ENCODE measurements at regions of chr19 and their contacts with region 1.

Region 1: DNA sequence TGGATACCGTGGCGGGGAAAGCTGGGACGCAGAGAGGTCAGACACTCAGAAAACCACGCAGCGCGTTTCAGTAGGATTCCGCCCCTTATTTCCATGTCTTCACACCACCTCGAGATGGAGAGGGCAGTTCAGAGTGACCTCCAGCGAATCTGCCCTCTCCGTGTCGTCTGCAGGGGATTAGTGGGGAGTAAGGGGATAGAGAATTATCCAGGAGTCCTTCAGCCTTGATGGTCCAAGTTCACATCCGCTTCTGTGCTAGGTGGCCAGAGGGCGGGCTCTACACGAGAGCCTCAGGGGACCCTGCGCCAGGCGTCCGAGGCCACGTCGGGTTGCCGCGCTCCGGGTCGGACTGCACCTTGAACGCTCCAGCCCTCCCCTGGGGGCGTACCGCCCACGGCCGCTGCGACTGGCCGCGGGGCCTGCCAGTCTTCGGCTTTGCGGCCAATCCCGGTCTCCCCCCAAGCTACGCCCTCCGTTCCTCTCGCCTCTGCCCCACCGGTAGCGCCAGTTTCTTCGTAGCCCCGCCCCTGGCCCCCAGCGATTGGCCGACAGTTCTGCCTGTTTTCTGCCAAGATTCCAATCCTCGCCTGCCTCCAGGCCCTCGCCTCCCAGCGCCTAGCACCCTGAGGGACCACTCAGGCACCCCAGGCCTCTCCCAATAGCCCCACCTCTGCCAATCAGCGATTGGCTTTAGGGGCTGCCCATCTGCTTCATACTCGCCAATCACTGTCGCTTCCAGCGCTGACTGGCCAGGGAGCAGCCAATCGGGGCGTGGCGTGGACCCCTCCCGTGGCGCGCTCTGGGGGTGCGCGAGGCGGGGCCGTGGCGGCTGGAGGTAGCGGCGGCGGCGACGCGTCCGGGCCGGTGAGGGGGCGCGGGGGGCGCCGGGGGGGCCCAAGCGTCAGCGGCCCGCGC is at the start of gene SLC25A42:
- DNase-seq: peak; percentile 99
- ATAC-seq: peak; percentile 96
- total RNA-seq, gene SLC25A42: 30.9 TPM

Region 2: GRCh38 chr19:18742838-18743783 is 320.3 kb before region 1 on chr19:
- intact Hi-C with region 1: no loop called
- DNase-seq: peak; percentile 86
- ATAC-seq: peak; percentile 81

Region 3: DNA sequence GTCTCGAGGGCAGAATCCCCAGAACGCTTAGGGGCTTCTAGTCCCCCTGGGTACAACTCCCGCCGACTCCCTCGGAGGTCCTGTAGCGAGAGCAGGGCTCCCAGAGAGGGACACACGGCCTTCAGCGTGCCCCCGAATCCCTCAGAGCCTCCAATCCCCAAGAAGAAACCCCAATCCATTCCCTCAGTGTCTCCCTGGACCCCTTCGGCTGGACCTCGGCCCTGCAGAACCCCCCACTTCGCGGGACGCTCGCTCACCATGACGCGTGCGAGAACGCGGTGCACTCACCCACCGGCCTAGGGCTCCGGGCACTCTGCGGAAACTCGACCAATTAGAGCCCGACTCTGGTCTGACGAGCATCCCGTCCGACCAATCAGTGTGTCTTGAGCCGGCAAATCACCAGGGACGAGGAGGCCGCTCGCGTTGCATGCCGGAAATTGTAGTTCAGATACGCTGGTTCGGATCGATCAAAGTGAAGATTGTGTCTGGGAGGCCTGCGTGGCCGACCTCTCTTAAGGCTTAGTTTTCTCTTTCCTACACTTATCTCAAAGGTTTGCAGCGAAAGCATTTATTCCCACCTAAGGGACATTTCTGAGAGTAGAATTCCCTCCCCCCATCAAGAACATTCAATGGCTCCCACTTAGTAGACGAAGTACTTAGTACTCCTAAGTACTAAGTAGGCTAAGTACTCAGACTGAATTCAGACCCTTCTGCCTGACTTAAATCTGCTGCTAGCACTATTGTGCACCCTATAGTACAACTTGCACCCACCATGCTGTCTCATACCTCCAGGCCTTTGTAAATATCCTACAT is 74.9 kb after region 1 on chr19 and contains the start of gene TMEM161A:
- intact Hi-C with region 1: loop called (anchors 2 kb)
- DNase-seq: peak; percentile 98
- ATAC-seq: peak; percentile 97
- total RNA-seq, gene TMEM161A: 23.5 TPM

Region 4: GRCh38 chr19:19192078-19192882 is 128.8 kb after region 1 on chr19 and contains the starts of genes BORCS8 and RFXANK:
- intact Hi-C with region 1: loop called (anchors 1 kb)
- DNase-seq: peak; percentile 99
- ATAC-seq: peak; percentile 98
- total RNA-seq, gene BORCS8: 19.5 TPM
- total RNA-seq, gene RFXANK: 39.9 TPM

Region 5: DNA sequence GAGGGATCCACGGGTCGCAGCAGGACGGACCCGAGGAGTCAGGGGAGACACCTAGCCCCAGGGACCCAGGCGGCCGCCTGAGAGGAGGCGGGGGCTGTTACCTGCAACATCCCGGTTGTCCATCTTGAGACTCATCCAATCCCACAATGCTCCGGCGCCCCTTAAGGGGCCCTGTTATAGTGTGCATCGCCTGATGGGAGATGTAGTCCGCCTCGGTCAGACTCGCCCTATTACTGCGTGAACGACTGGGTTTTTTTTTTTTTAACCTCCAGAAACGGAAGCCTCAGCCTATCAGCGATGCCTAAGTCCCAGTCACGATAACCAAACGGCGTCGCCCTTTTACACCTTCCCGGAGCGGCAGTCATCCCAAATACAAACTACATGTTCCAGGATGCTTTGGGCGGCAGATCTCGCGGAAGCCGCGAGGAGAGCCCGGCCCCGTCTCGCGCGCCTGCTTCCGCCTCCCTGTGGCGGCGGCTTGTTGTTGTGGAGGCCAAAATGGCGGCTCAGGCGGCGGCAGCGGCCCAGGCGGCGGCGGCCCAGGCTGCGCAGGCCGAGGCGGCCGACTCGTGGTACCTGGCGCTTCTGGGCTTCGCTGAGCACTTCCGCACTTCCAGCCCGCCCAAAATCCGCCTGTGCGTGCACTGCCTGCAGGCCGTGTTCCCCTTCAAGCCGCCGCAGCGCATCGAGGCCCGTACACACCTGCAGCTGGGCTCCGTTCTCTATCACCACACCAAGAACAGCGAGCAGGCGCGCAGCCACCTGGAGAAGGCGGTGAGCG is 257.1 kb after region 1 on chr19 and contains the starts of genes MAU2 and SUGP1:
- intact Hi-C with region 1: loop called (anchors 10 kb)
- DNase-seq: peak; percentile 95
- ATAC-seq: peak; percentile 95
- total RNA-seq, gene MAU2: 31.8 TPM
- total RNA-seq, gene SUGP1: 34.9 TPM

Region 6: GRCh38 chr19:20431826-20432225 is 1368.4 kb after region 1 on chr19:
- intact Hi-C with region 1: no loop called
- DNase-seq: no peak
- ATAC-seq: no peak